Activated CD4-positive, alpha-beta T cell treated with anti-CD3 and anti-CD28 coated beads for 36 hours (primary cell): ENCODE measurements at regions of chr11 and their contacts with region 1.

Region 1: GRCh38 chr11:103070142-103070541 is 21.8 kb downstream of the DCUN1D5 start:
- DNase-seq: no peak
- ATAC-seq: peak; percentile 44
- H3K4me3 Mint-ChIP-seq: peak overlapping the region; percentile 30
- H3K27ac Mint-ChIP-seq: peak overlapping the region; percentile 56
- H3K4me1 Mint-ChIP-seq: peaks cover 40% of the 10 kb centered on the region
- H3K27me3 Mint-ChIP-seq: no peaks in the 10 kb centered on the region

Region 2: DNA sequence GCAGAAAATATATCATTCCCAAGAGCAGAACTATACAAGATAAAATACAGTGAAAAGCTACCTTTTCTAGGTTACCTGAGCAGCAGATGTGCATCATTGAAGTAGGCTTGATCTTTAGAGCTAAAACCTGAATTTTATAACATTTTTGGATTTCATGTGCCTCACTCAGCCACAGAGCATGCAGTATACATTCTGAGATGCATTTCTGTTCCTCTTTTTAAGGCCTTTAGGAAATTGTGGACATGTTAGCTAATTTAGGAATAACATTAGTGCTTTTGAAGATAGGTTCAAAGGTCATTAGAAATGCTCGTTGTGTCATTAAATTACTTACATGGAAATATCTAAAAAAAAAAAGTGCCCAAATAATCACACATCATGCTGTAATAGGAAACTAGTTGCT is 1324.4 kb after region 1 on chr11:
- CTCF ChIA-PET with region 1: no interaction called
- POLR2A ChIA-PET with region 1: interaction called, 13 read pairs
- intact Hi-C with region 1: no loop called
- DNase-seq: no peak
- ATAC-seq: no peak
- H3K4me3 Mint-ChIP-seq: no peak overlapping the region
- H3K27ac Mint-ChIP-seq: no peak overlapping the region
- H3K4me1 Mint-ChIP-seq: no peaks in the 10 kb centered on the region
- H3K27me3 Mint-ChIP-seq: peaks cover 7% of the 10 kb centered on the region